Transverse colon (tissue), 4 donors: ENCODE measurements at regions of chr7 and their contacts with region 1.

Region 1: DNA sequence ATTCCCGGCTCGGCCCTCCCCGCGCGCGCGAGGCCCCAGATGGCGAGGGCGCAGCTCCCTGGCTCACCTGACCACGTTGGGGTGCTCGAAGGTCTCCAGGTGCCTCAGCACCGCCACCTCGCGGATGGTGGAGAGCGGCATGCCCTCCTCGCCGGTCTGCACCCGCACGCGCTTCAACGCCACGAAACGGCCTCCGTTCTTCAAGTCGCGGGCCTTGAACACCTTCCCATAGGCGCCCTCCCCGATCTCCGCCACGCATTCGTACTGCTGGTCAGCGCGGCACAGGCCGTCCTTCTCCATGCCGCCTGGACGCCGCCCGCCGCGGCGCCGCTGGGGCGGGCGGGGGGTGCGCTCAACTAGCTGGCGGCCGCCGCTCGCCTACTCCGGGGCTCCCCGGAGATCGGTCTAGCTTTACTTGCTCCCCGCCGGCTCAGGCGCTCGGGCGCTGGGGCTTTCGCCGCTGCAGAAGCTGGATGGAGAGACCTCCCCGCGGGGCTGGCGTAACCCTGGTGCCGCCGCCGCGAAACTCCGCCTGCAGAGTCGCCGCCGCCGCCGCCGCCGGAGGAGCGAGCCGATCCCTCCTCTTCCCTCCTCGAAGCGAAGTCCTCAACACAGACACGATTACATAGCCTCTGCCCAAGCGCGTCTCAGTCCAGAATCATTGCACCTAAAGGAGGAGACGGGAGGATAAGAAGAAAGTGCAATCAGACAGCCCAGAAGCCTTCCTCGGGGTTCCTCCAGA is 3.2 kb downstream of the CDK6 start:
- DNase-seq: peak; percentile 93
- H3K4me3 ChIP-seq: peak overlapping the region; percentile 65 to 89 (median 80)
- H3K27ac ChIP-seq: peak overlapping the region; percentile 92 to 94 (median 93)
- H3K4me1 ChIP-seq: peaks cover 13 to 51% (median 31%) of the 10 kb centered on the region in 4 donors
- H3K27me3 ChIP-seq: no peaks in the 10 kb centered on the region
- CTCF ChIP-seq: peak; percentile 86 to 96 (median 88)
- EP300 ChIP-seq: no peak
- POLR2A ChIP-seq: peak; percentile 31

Region 2: GRCh38 chr7:92609921-92610518 is 223.2 kb before region 1 on chr7:
- in situ Hi-C with region 1: no loop called
- intact Hi-C with region 1: loop called (anchors 10 kb)
- DNase-seq: no peak
- H3K4me3 ChIP-seq: no peak overlapping the region
- H3K27ac ChIP-seq: no peak overlapping the region
- H3K4me1 ChIP-seq: peaks cover 0 to 14% (median 6%) of the 10 kb centered on the region in 4 donors
- H3K27me3 ChIP-seq: no peaks in the 10 kb centered on the region
- CTCF ChIP-seq: peak; percentile 34 to 39 (median 36)
- EP300 ChIP-seq: no peak
- POLR2A ChIP-seq: no peak

Region 3: GRCh38 chr7:92621026-92621540 is 212.1 kb before region 1 on chr7:
- in situ Hi-C with region 1: loop called in 3 of 4 experiments (anchors 10 kb)
- intact Hi-C with region 1: loop called (anchors 10 kb)
- DNase-seq: peak; percentile 76
- H3K4me3 ChIP-seq: no peak overlapping the region
- H3K27ac ChIP-seq: peak overlapping the region; percentile 35 to 58 (median 52)
- H3K4me1 ChIP-seq: peaks cover 0 to 21% (median 9%) of the 10 kb centered on the region in 4 donors
- H3K27me3 ChIP-seq: no peaks in the 10 kb centered on the region
- CTCF ChIP-seq: peak; percentile 69 to 88 (median 80)
- EP300 ChIP-seq: no peak
- POLR2A ChIP-seq: no peak

Region 4: DNA sequence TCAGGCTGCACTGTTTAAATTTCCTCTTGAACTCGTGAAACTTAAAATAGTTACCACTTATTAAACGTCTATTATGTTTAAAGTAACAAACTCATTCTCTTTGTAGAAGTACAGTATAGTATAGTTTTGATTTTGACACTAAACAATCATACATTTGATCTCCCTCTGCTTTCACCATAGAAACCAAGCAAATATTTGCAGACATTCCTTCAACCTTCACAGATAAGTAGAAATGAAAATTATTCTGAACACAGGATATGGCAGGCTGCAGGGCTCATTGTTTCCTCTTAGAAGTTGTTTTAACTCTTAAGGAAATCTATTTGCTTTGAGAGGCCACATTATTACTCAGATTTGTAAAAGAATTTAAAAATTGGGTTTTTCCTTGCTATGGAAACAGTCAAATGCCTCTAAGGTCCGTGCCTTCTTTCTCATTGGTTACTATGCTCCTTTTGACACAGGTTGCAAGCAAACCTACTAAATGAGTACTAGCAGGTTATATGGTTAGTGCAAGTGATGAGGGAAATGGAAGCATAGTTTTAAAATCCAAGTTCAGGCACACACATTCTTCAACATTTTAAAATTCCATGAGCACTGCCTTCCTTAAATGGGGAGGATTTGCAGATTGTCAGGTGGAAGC is 150.2 kb before region 1 on chr7:
- in situ Hi-C with region 1: loop called in 1 of 4 experiments (anchors 10 kb)
- intact Hi-C with region 1: no loop called
- DNase-seq: no peak
- H3K4me3 ChIP-seq: no peak overlapping the region
- H3K27ac ChIP-seq: peak overlapping the region; percentile 5 to 19 (median 14)
- H3K4me1 ChIP-seq: peaks cover 14 to 28% (median 22%) of the 10 kb centered on the region in 4 donors
- H3K27me3 ChIP-seq: no peaks in the 10 kb centered on the region
- CTCF ChIP-seq: no peak
- EP300 ChIP-seq: no peak
- POLR2A ChIP-seq: no peak

Region 5: DNA sequence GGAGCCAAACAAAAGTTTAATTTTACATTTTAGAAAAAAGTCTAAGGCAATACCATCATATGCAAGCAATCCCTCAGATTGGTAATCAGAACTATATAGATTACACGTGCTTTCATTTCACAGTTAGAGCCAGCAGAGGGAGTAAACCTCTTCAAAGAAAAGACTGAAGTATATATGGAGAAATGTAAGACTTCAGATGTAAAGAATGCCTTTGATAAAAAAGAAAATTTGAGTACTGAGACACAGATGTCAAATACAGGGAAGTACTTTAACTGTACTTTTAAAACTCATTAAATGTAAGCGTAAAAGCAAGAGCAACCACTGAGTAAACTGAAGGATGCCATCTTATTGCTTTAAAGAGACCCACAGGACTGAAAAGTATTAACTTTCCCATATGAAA is 141.6 kb before region 1 on chr7:
- in situ Hi-C with region 1: loop called (anchors 5 to 10 kb)
- intact Hi-C with region 1: loop called (anchors 5 kb)
- DNase-seq: no peak
- H3K4me3 ChIP-seq: no peak overlapping the region
- H3K27ac ChIP-seq: peak overlapping the region in 1 of 4 donors; percentile 15
- H3K4me1 ChIP-seq: peaks cover 3 to 29% (median 12%) of the 10 kb centered on the region in 4 donors
- H3K27me3 ChIP-seq: no peaks in the 10 kb centered on the region
- CTCF ChIP-seq: peak; percentile 54 to 74 (median 60)
- EP300 ChIP-seq: no peak
- POLR2A ChIP-seq: no peak

Region 6: DNA sequence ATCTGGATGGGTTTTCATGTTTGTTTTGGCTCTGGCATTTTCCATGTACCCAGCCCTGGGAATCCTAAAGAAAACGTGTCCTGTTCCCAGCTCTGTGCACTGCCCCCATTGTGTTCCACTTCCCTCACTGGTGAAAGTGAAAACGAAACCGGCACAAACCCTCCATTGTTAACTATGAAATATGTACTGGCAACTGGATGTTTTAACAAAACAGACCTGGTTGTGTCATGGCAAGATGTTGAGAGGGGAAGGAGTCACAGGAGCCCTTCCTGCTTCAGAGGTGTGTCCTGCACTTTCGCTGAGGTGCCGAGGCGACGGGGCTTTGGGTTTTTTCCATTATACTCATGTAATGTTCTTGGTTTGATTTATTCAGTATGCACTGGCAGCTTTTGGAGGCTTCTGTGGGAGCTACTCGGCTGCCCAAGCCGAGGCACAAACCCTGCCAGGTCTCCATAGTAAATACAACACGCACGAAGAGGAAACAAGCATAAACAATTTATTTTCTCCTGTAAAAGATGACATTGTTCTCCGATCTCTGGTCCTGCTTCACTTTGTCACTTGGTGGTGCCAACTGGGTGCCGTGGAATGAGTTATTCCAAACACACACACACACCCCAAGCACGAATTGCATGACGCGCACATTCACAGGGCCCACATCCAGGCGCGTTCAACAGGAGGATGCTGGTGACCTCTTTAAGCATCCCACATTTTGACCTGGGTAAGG is 115.0 kb before region 1 on chr7:
- in situ Hi-C with region 1: no loop called
- intact Hi-C with region 1: loop called (anchors 5 kb)
- DNase-seq: peak; percentile 55
- H3K4me3 ChIP-seq: peak overlapping the region; percentile 5 to 48 (median 44)
- H3K27ac ChIP-seq: peak overlapping the region; percentile 82 to 91 (median 86)
- H3K4me1 ChIP-seq: peaks cover 0 to 29% (median 19%) of the 10 kb centered on the region in 4 donors
- H3K27me3 ChIP-seq: no peaks in the 10 kb centered on the region
- CTCF ChIP-seq: no peak
- EP300 ChIP-seq: no peak
- POLR2A ChIP-seq: peak; percentile 33

Region 7: GRCh38 chr7:92768501-92769393 is 64.4 kb before region 1 on chr7:
- in situ Hi-C with region 1: no loop called
- intact Hi-C with region 1: no loop called
- DNase-seq: no peak
- H3K4me3 ChIP-seq: no peak overlapping the region
- H3K27ac ChIP-seq: peak overlapping the region in 3 of 4 donors; percentile 31 to 69 (median 46)
- H3K4me1 ChIP-seq: peaks cover 0 to 37% (median 19%) of the 10 kb centered on the region in 4 donors
- H3K27me3 ChIP-seq: no peaks in the 10 kb centered on the region
- CTCF ChIP-seq: no peak
- EP300 ChIP-seq: no peak
- POLR2A ChIP-seq: no peak